ENCODE measurements at regions of chr11 and their contacts with region 1.

Region 1: GRCh38 chr11:87421422-87421821 is 383.7 kb downstream of the TMEM135 start:
- DNase-seq: no peak
- H3K4me3 Mint-ChIP-seq: no peak overlapping the region
- H3K27ac Mint-ChIP-seq: no peak overlapping the region
- H3K4me1 Mint-ChIP-seq: no peaks in the 10 kb centered on the region
- H3K27me3 Mint-ChIP-seq: no peaks in the 10 kb centered on the region

Region 2: DNA sequence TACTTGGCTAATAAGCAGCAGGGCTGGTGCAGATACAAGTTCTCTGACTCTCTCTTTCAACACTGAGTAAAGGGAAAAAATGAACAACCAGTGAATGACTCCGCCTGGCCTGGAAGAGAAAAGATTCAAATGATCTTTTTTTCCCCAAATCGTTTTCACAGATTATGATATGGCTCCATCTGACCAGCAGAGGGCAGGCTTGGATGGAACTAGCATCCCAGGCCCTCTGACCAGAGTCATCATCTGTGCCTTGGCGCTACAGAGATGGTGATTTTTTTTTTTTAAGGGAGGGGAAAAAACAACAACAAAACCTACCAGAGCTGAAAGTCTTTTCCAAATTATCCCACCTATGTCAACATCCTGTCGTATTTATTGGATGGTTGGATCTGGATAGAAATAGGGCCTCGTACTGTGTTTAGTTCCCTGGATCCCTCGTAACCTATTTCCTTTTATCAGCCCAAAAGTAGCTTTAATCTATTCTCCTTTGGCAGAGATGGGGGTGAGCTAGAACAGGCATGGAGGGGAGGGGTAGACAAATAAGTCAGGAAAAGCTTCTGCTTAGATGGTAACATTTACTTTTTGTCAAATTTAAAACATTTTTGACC is 551.4 kb before region 1 on chr11:
- CTCF ChIA-PET with region 1: interaction called, 7 read pairs
- POLR2A ChIA-PET with region 1: no interaction called
- intact Hi-C with region 1: loop called (anchors 1 kb)
- DNase-seq: peak; percentile 58
- H3K4me3 Mint-ChIP-seq: no peak overlapping the region
- H3K27ac Mint-ChIP-seq: no peak overlapping the region
- H3K4me1 Mint-ChIP-seq: no peaks in the 10 kb centered on the region
- H3K27me3 Mint-ChIP-seq: no peaks in the 10 kb centered on the region

Region 3: GRCh38 chr11:86938900-86939880 is 482.2 kb before region 1 on chr11:
- CTCF ChIA-PET with region 1: interaction called, 23 read pairs
- POLR2A ChIA-PET with region 1: no interaction called
- intact Hi-C with region 1: loop called (anchors 1 kb)
- DNase-seq: no peak
- H3K4me3 Mint-ChIP-seq: no peak overlapping the region
- H3K27ac Mint-ChIP-seq: no peak overlapping the region
- H3K4me1 Mint-ChIP-seq: no peaks in the 10 kb centered on the region
- H3K27me3 Mint-ChIP-seq: peaks cover 1% of the 10 kb centered on the region

Region 4: DNA sequence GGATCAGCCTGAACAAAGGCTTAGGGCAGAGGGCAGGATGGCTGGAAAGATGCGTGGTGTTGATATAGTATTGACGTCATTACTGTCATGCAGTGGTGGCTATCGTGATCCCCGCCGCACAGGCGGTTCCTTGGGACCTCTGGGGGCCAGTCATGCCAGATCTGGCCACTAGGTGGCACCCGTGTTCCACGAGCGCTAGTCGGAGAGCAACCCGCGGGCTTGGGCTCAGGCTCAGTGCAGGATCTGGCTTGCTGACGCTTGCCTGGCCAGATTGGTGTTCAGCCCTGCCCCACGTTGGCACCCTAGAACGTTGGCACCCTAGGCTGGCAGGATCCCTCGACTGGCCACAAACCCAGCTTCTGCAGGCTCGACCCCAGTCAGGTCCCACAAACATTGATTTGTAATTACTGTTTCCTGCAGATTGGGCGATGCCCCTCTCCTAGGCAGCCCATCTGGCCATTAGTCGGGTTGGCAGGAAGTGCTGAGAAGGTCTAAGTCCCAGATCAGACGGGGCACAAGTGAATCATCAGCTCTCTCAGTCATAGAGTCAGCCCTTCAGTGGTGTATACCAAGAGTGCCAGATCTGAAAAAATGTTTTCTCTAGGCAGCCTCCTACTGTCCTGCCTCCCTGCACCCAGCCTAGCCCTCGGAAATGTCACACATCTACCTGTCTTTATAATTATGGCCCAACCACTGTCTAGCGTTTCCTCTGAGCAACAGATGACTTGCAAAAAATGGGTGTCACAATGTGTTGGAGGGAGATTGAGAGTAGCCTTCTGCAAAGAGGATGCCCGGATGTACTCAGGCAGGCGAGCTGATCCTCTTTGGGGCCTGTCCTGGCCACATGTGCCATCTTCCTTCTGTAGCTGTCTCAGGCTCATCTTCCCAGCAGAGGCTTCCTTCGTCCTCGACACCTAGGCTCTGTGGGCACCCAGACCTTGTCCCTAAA is 68.4 kb before region 1 on chr11:
- CTCF ChIA-PET with region 1: interaction called, 145 read pairs
- POLR2A ChIA-PET with region 1: no interaction called
- intact Hi-C with region 1: loop called (anchors 1 kb)
- DNase-seq: peak; percentile 90
- H3K4me3 Mint-ChIP-seq: no peak overlapping the region
- H3K27ac Mint-ChIP-seq: no peak overlapping the region
- H3K4me1 Mint-ChIP-seq: peaks cover 8% of the 10 kb centered on the region
- H3K27me3 Mint-ChIP-seq: peaks cover 5% of the 10 kb centered on the region

Region 5: DNA sequence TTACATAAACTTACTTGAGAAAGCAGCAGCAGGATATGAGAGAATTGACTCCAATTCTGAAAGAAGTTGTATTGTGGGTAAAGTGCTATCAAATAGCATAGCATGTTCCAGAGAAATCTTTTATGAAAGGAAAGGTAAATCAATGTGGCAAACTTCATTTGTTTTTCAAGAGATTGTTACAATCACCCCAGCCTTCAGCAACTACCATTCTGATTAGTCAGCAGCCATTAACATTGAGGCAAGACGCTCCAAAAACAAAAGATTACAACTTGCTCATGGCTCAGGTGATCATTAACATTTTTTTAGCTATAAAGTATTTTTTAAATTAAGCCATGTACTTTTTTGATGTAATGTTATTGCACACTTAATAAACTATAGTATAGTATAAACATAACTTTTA is 26.5 kb before region 1 on chr11:
- CTCF ChIA-PET with region 1: interaction called, 10 read pairs
- POLR2A ChIA-PET with region 1: no interaction called
- intact Hi-C with region 1: no loop called
- DNase-seq: no peak
- H3K4me3 Mint-ChIP-seq: no peak overlapping the region
- H3K27ac Mint-ChIP-seq: no peak overlapping the region
- H3K4me1 Mint-ChIP-seq: no peaks in the 10 kb centered on the region
- H3K27me3 Mint-ChIP-seq: no peaks in the 10 kb centered on the region

Region 6: DNA sequence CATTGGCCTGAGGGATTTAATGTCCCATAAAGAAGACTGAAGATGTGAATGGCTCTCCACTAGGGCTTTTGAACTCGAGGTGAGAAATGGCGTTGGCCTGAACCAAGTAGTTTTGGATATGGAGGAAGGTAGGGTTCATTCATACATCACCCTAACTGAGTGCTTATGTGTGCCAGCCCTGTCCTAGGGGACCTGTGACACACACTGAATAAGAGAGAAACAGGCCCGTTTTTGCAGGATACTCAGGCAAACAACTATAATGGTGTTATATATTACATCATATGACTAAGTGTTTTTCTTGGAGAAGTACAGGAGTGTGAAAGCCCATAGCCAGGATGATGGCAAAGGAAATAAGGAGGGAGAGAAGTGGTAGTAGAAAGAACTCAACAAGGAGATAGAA is 15.6 kb before region 1 on chr11:
- CTCF ChIA-PET with region 1: interaction called, 22 read pairs
- POLR2A ChIA-PET with region 1: no interaction called
- intact Hi-C with region 1: no loop called
- DNase-seq: no peak
- H3K4me3 Mint-ChIP-seq: no peak overlapping the region
- H3K27ac Mint-ChIP-seq: no peak overlapping the region
- H3K4me1 Mint-ChIP-seq: no peaks in the 10 kb centered on the region
- H3K27me3 Mint-ChIP-seq: peaks cover 2% of the 10 kb centered on the region

Region 7: GRCh38 chr11:87432022-87432421 is 10.6 kb after region 1 on chr11:
- CTCF ChIA-PET with region 1: interaction called, 16 read pairs
- POLR2A ChIA-PET with region 1: interaction called, 3 read pairs
- intact Hi-C with region 1: no loop called
- DNase-seq: no peak
- H3K4me3 Mint-ChIP-seq: no peak overlapping the region
- H3K27ac Mint-ChIP-seq: no peak overlapping the region
- H3K4me1 Mint-ChIP-seq: no peaks in the 10 kb centered on the region
- H3K27me3 Mint-ChIP-seq: no peaks in the 10 kb centered on the region